Vagina (tissue), 2 donors: ENCODE measurements at regions of chr1 and their contacts with region 1.

Region 1: DNA sequence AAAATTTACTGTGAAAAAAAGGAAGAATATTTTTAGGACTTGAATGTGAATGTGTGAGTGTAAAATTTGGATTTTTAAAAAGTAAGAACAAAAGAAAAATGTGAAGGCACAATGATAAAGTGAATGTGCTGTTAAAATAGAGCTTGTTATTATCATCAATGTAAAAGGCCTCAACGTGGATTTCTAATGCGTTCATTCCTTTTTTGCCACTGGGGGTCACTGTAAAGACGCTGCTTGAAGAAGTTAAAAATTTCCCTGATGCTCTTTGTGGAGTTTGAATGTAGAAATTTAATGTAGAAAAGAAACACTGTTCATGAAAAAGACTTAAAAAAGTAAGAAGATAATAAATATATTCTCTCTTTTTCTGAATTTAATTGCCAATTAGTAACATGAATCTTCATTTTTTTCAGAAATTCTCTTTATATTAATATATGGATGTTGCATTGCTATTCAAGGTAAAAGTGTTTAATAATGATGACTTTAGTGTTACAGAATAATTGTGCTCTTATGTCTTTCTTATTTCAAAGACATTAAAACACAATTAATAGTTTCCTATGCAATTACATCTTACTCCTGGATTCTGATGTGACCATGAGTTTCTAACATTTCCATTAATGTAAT is 161.5 kb downstream of the DNM3 start:
- DNase-seq: no peak
- H3K4me3 ChIP-seq: no peak overlapping the region
- H3K27ac ChIP-seq: no peak overlapping the region
- H3K4me1 ChIP-seq: no peaks in the 10 kb centered on the region
- H3K27me3 ChIP-seq: no peaks in the 10 kb centered on the region
- CTCF ChIP-seq: peak in 2 of 3 experiments; percentile 53 to 73
- POLR2A ChIP-seq: no peak

Region 2: DNA sequence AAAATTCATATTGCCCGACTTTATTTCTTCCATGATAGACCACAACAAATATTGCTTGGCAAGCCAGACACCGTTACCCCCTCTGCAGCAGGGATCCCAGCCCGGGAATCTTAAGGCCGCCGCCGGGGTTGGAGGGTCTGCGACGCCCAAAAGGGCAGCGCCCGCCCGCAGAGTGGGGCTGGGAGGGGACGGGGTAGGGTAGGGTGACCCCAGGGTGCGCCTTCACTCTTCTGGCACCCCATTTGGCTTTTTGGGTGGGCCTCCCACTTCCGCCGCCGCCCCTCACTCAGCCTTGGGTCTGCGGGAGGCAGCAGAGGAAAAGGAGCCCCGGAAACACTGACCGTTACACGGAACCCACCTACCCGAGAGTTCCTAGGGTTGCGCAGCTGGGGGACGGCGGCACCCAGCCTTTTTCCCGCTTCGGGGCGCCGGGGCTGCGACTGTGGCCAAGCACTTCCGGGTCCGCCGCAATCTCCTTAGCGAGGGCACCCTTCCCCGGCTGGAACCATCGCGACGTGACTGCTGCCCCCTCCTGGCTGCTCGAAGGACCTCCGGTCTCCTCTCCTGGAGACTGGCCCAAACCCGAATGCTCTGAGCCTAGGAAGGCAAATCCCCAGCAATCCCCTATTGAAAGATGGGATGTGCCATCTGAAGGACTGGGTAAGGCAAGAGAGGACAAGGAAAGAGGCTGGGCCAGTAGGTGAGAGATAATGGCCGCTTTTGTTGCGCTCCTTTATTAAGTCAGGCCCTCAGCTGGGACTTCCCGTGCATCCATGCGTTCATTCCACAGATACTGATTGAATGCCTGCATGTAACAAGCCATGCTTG is 441.0 kb after region 1 on chr1 and contains the start of gene PIGC:
- intact Hi-C with region 1: loop called (anchors 10 kb)
- DNase-seq: no peak
- H3K4me3 ChIP-seq: peak within 1 kb of the TSS; percentile 92 to 99
- H3K27ac ChIP-seq: peak within 1 kb of the TSS; percentile 91
- H3K4me1 ChIP-seq: peaks cover 31% of the 10 kb centered on the region
- H3K27me3 ChIP-seq: no peaks in the 10 kb centered on the region
- CTCF ChIP-seq: peak; percentile 71 to 79 (median 72)
- POLR2A ChIP-seq: no peak
- total RNA-seq, gene PIGC: 14.5 TPM